ENCODE measurements at regions of chr3 and their contacts with region 1.

Region 1: GRCh38 chr3:111668912-111669488 is 73.9 kb upstream of the ZBED2 start:
- DNase-seq: no peak
- H3K4me3 Mint-ChIP-seq: no peak overlapping the region
- H3K27ac Mint-ChIP-seq: peak overlapping the region; percentile 37
- H3K4me1 Mint-ChIP-seq: peaks cover 64% of the 10 kb centered on the region
- H3K27me3 Mint-ChIP-seq: no peaks in the 10 kb centered on the region

Region 2: GRCh38 chr3:110814170-110815007 is 854.6 kb before region 1 on chr3:
- intact Hi-C with region 1: loop called (anchors 10 kb)
- DNase-seq: peak; percentile 35
- H3K4me3 Mint-ChIP-seq: peak overlapping the region; percentile 43
- H3K27ac Mint-ChIP-seq: peak overlapping the region; percentile 91
- H3K4me1 Mint-ChIP-seq: peaks cover 29% of the 10 kb centered on the region
- H3K27me3 Mint-ChIP-seq: peaks cover 26% of the 10 kb centered on the region

Region 3: GRCh38 chr3:111311709-111312235 is 357.2 kb before region 1 on chr3:
- intact Hi-C with region 1: loop called (anchors 5 kb)
- DNase-seq: no peak
- H3K4me3 Mint-ChIP-seq: peak overlapping the region; percentile 18
- H3K27ac Mint-ChIP-seq: peak overlapping the region; percentile 77
- H3K4me1 Mint-ChIP-seq: peaks cover 39% of the 10 kb centered on the region
- H3K27me3 Mint-ChIP-seq: no peaks in the 10 kb centered on the region

Region 4: GRCh38 chr3:111616417-111617105 is 52.4 kb before region 1 on chr3:
- intact Hi-C with region 1: loop called (anchors 2 kb)
- DNase-seq: peak; percentile 51
- H3K4me3 Mint-ChIP-seq: peak overlapping the region; percentile 27
- H3K27ac Mint-ChIP-seq: peak overlapping the region; percentile 92
- H3K4me1 Mint-ChIP-seq: peaks cover 74% of the 10 kb centered on the region
- H3K27me3 Mint-ChIP-seq: no peaks in the 10 kb centered on the region

Region 5: DNA sequence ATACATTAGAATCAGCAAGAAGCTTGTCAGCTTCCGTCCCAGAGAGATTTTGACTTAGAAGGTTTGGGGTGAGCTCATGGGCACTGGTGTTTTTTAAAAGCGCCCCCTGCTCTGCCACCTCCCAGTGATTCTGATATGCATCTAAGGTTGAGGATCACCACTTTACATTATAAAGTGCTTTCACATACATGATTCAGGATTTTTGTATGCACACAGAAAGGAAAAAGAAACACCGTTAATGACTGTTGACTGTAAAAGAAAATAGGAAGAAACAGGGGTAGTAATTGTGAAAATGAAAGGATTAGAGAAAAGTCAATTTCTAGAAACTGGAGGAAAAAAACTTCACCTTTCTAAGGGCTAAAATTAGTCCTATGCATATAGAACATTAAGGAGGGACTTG is 31.1 kb after region 1 on chr3:
- intact Hi-C with region 1: loop called (anchors 5 kb)
- DNase-seq: no peak
- H3K4me3 Mint-ChIP-seq: peak overlapping the region; percentile 49
- H3K27ac Mint-ChIP-seq: peak overlapping the region; percentile 67
- H3K4me1 Mint-ChIP-seq: peaks cover 26% of the 10 kb centered on the region
- H3K27me3 Mint-ChIP-seq: no peaks in the 10 kb centered on the region

Region 6: GRCh38 chr3:111967651-111968274 is 298.8 kb after region 1 on chr3:
- intact Hi-C with region 1: loop called (anchors 1 kb)
- DNase-seq: peak; percentile 67
- H3K4me3 Mint-ChIP-seq: no peak overlapping the region
- H3K27ac Mint-ChIP-seq: no peak overlapping the region
- H3K4me1 Mint-ChIP-seq: peaks cover 17% of the 10 kb centered on the region
- H3K27me3 Mint-ChIP-seq: peaks cover 6% of the 10 kb centered on the region